ENCODE measurements at regions of chr6 and their contacts with region 1.

Region 1: GRCh38 chr6:32413427-32414047 is 6.6 kb upstream of the BTNL2 start:
- DNase-seq: peak; percentile 80
- ATAC-seq: peak; percentile 88
- H3K4me3 Mint-ChIP-seq: peak overlapping the region; percentile 75
- H3K27ac Mint-ChIP-seq: peak overlapping the region; percentile 5
- H3K4me1 Mint-ChIP-seq: peaks cover 14% of the 10 kb centered on the region
- H3K27me3 Mint-ChIP-seq: peaks cover 4% of the 10 kb centered on the region
- CTCF ChIP-seq: no peak

Region 2: DNA sequence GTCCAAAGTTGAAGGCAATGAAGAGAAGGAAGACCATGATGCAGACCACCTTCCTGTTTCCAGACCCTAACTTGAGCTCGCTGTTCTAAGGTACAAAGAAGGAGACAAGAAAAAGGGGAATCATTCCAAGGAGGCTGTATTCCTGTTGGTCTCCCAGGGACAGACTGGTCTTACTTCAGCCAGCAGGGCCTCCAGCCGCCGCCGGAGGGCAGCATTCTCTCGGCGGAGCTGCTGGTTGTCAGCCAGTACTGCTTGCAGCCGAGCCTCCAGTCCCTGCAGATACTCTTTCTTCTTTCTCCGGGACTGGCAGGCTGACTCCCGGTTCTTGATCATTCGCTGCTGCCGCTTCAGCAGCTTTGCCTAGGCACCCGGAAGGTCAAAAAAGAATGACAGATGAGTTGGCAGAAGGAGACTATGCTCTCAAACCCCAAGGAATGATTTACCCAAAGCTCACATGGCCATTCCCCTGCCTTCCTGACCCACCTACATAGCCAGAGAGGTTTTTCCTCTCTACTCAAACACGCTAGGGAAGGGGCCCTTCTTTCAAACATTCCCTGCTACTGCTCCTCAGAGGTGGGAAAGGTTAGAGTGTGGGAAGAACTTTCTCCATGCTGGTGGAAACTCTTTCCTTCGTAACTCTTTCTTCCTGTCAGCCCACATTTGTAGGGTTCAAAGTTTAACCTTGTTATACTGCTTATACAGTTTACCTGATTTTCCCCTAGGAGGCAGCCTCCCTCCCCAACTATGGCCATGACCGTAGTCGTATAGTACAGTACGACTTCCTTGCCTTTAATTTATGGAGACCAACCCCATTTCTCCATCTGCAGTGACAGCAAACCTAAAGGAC is 294.5 kb before region 1 on chr6:
- CTCF ChIA-PET with region 1: no interaction called
- POLR2A ChIA-PET with region 1: no interaction called
- intact Hi-C with region 1: loop called (anchors 10 kb)
- DNase-seq: peak; percentile 57
- ATAC-seq: peak; percentile 94
- H3K4me3 Mint-ChIP-seq: no peak overlapping the region
- H3K27ac Mint-ChIP-seq: peak overlapping the region; percentile 56
- H3K4me1 Mint-ChIP-seq: peaks cover 8% of the 10 kb centered on the region
- H3K27me3 Mint-ChIP-seq: no peaks in the 10 kb centered on the region
- CTCF ChIP-seq: peak; percentile 57

Region 3: GRCh38 chr6:32397252-32397920 is 16.2 kb before region 1 on chr6:
- CTCF ChIA-PET with region 1: interaction called, 13 read pairs
- POLR2A ChIA-PET with region 1: no interaction called
- intact Hi-C with region 1: loop called (anchors 1 kb)
- DNase-seq: no peak
- ATAC-seq: peak; percentile 90
- H3K4me3 Mint-ChIP-seq: peak overlapping the region; percentile 66
- H3K27ac Mint-ChIP-seq: peak overlapping the region; percentile 81
- H3K4me1 Mint-ChIP-seq: peaks cover 18% of the 10 kb centered on the region
- H3K27me3 Mint-ChIP-seq: no peaks in the 10 kb centered on the region
- CTCF ChIP-seq: no peak

Region 4: DNA sequence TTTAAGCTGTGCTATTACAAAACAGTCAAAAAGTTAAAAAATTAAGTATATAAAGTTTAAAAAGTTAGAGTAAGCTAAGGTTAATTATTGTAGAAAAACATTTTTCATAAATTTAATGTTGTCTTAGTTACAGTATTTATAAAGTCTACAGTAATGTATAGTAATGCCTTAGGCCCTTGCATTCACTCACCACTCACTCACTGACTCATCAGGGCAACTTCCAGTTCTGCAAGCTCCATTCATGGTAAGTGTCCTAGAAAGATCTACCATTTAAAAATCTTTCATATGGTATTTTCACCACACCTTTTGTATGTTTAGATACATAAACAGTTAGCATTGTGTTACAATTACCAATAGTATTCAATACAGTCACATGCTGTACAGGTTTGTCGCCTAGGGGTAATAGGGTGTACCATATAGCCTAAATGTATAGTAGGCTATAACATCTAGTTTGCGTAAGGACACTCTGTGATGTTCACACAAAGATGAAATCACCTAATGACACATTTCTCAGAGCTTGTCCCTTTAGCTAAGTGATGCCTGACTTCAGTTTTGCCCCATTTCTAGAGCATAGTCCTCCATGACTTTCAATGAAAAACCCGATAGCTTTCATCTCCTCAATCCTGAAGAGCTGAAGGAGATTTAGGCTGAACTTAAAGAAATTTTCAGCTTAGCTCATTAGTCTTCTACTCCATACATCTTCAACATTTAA is 11.2 kb after region 1 on chr6:
- CTCF ChIA-PET with region 1: interaction called, 22 read pairs
- POLR2A ChIA-PET with region 1: no interaction called
- intact Hi-C with region 1: no loop called
- DNase-seq: no peak
- ATAC-seq: no peak
- H3K4me3 Mint-ChIP-seq: no peak overlapping the region
- H3K27ac Mint-ChIP-seq: no peak overlapping the region
- H3K4me1 Mint-ChIP-seq: no peaks in the 10 kb centered on the region
- H3K27me3 Mint-ChIP-seq: peaks cover 5% of the 10 kb centered on the region
- CTCF ChIP-seq: no peak

Region 5: DNA sequence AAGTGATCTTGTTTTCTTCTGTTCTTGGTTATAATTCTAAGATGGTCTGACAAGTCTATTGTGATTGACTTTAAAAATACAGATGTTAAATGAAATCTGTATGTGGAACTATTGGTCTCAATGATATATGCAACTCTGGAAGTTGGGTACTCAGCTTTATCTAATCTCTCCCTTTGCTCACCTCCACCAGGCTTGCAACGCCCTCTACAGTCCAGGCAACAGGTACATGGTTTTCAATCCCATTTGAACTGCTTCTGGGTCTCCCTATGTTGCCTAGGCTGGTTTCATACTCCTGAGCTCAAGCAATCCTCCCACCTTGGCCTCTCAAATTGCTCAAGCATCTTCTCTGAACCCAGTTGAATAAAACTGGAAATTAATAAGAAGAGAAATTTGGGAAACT is 278.5 kb after region 1 on chr6:
- CTCF ChIA-PET with region 1: interaction called, 11 read pairs
- POLR2A ChIA-PET with region 1: interaction called, 3 read pairs
- intact Hi-C with region 1: no loop called
- DNase-seq: no peak
- ATAC-seq: peak; percentile 49
- H3K4me3 Mint-ChIP-seq: peak overlapping the region; percentile 3
- H3K27ac Mint-ChIP-seq: peak overlapping the region; percentile 85
- H3K4me1 Mint-ChIP-seq: peaks cover 54% of the 10 kb centered on the region
- H3K27me3 Mint-ChIP-seq: no peaks in the 10 kb centered on the region
- CTCF ChIP-seq: no peak

Region 6: DNA sequence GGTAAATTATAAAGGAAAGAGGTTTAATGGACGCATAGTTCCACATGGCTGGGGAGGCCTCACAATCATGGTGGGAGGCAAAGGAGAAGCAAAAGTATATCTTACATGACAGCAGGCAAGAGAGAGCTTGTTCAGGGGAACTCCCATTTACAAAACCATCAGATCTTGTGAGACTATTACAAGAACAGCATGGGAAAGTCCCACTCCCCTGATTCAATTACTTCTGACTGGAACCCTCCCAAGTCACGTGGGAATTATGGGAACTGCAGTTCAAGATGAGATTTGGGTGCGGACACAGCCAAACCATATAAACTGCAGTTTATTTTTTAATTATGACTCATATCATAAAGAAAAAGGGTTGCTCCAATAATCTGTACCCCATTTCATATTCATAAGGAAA is 305.3 kb after region 1 on chr6:
- CTCF ChIA-PET with region 1: no interaction called
- POLR2A ChIA-PET with region 1: no interaction called
- intact Hi-C with region 1: loop called (anchors 5 kb)
- DNase-seq: no peak
- ATAC-seq: no peak
- H3K4me3 Mint-ChIP-seq: no peak overlapping the region
- H3K27ac Mint-ChIP-seq: no peak overlapping the region
- H3K4me1 Mint-ChIP-seq: no peaks in the 10 kb centered on the region
- H3K27me3 Mint-ChIP-seq: peaks cover 8% of the 10 kb centered on the region
- CTCF ChIP-seq: no peak